GM10248 (cell line): ENCODE measurements at regions of chr2 and their contacts with region 1.

Region 1: GRCh38 chr2:62456721-62457539 is 49.1 kb downstream of the TMEM17 start:
- DNase-seq: peak; percentile 88
- CTCF ChIP-seq: peak; percentile 94

Region 2: DNA sequence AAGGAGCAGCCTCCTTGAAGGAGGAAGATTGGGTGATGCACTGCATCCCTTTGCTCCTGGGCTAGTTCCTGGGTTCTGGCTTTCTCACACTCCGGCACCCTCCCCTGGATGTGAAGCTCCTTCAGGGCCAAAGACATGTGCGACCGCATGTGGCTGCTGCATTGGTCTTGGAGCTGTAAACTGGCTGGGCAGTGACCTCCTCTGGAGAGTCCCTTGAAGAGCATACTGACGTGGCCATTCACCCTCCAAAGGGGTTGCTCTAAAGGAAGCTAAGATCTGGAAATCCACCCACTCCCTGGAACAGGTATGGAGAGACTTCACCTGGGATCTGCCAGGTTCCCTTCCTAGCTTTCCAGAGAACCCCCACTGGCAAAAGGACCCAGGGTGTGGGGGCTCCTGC is 13.0 kb before region 1 on chr2:
- CTCF ChIA-PET with region 1: interaction called, 74 read pairs
- POLR2A ChIA-PET with region 1: no interaction called
- DNase-seq: no peak
- CTCF ChIP-seq: no peak

Region 3: DNA sequence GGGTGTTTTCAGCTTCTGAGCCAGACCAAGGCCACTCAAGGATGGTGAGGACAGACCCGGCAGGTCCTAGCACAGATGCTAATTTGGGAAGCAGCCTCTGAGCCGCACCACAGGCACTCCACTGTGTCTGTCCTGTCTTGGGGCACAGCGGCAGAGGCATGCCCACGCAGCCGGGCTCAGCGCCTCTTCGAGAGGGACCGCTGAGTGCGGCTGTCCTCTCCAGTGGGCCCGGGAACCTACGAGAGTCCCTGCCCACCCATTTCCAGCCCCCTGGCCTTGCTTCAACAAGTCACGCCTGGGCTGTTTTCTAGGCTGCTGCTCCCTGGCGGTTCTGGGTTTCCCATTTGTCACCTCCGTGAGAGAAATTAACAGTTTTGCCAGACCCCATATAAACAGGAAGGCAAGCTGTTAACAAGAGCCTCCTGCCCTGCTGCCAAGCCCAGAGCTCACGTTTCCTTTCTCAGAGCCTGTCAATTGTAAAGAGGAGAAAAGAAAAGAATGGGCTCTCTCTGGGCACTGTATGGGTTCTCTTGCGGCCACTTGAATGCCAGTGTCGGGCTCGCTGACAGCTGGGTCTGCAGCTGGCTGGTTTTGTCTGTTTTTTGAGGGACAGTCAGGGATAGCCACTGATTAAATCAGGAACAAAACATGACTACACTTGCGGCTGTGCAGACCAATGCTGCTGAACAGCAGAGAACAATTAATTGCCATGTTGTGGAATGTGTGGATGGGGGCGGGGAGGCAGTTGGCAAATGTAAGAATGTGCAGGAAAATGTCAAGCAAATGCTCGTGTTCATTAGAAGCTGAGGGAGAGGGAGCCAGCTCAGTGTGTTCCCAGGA is 18.5 kb after region 1 on chr2:
- CTCF ChIA-PET with region 1: interaction called, 80 read pairs
- POLR2A ChIA-PET with region 1: no interaction called
- DNase-seq: no peak
- CTCF ChIP-seq: no peak

Region 4: GRCh38 chr2:62765619-62766376 is 308.9 kb after region 1 on chr2:
- CTCF ChIA-PET with region 1: interaction called, 243 read pairs
- POLR2A ChIA-PET with region 1: no interaction called
- DNase-seq: no peak
- CTCF ChIP-seq: no peak